SK-N-SH (cell line): ENCODE measurements at regions of chr17 and their contacts with region 1.

Region 1: DNA sequence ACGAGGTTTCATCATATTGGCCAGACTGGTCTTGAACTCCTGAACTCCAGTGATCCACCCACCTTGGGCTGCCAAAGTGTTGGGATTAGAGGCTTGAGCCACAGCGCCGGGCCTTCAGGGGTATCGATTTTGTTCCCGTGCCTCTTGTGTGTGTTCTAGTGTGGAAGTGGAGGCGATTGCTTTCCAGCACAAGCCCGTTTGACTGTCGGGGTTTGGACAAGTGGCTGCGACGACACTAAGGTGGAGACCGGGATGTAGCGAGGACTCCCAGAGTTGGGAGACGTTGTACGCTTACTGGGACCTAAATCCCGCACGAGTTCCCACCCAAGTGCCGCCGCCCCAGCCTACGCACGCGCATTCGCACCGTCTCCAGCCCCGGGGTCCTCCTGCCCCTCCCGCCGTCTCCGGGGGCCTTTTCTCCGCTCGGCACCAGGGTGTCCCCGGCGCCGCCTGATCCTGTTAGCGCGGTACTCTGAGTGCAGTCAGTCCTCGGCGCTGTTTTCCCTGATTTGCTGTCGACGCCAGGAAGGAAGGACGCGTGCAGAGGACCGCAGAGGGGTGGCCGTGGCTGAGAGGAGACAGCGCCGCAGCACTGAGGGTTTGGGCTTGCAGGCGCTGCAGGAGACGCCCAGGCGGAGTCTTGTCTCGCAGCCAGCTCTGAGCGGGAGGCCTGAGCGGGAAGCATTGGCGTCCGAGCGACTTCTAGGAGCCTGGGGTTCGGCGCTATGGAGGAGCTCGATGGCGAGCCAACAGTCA is at the start of gene NUP85:
- DNase-seq: peak; percentile 100
- H3K4me3 ChIP-seq: peak within 1 kb of the TSS; percentile 70 to 87
- H3K27ac ChIP-seq: peak within 1 kb of the TSS; percentile 97 to 98
- H3K4me1 ChIP-seq: peaks cover 4 to 6% of the 10 kb centered on the region in 2 experiments; a peak in 1 of 4 replicates
- H3K27me3 ChIP-seq: no peaks in the 10 kb centered on the region
- CTCF ChIP-seq: no peak
- EP300 ChIP-seq: no peak
- RAD21 ChIP-seq: no peak
- polyA plus RNA-seq, gene NUP85: 80.5 and 99.8 TPM in 2 replicates

Region 2: DNA sequence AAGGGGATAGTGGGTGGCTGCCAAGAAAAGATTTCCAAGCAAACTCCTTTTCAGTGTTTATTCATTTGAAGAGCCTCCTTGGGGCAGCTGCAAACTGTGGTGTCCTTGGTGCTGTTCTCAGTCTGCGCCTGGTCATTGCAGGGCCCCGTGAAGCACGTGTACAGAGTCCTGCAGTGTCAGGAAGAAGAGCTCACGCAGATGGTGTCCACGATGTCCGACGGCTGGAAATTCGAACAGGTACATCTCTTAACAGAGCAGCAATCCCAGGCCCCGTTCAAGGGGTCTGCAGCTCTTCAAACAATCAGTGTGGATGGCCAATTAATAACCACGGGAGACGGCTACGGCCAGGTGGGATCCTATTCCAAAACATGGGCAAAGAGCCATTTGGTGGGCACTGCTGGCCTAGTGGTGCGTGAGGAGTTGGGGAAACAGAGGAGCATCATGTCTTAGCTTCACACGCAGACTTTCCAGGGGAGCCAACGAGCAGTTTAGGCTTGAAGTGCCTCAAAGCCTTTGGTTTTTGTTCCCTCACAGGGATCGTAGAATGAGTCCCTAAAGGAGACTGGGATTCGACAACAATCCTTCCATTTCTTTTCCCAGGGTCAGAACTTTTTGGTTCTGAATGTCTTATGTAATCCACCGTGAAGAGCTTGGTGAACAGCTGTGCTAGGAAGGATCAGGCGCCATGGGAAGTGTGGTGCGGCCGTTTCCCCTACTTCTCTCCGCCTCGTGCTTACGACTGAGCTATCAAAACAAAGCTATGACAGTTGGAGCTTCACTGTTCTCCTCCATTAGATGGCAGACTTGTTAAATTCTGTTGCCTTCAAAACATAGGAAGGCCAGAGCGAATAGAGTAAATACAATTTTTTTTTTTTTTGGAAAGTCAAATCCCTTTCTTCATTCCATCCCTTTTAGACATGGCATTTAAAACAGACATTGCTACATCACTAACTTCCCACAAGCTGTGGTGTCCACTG is 145.6 kb before region 1 on chr17:
- CTCF ChIA-PET with region 1: interaction called, 10 read pairs
- POLR2A ChIA-PET with region 1: no interaction called
- DNase-seq: peak; percentile 47
- H3K4me3 ChIP-seq: no peak overlapping the region
- H3K27ac ChIP-seq: no peak overlapping the region
- H3K4me1 ChIP-seq: no peaks in the 10 kb centered on the region
- H3K27me3 ChIP-seq: no peaks in the 10 kb centered on the region
- CTCF ChIP-seq: peak; percentile 57
- EP300 ChIP-seq: no peak
- RAD21 ChIP-seq: peak; percentile 55

Region 3: DNA sequence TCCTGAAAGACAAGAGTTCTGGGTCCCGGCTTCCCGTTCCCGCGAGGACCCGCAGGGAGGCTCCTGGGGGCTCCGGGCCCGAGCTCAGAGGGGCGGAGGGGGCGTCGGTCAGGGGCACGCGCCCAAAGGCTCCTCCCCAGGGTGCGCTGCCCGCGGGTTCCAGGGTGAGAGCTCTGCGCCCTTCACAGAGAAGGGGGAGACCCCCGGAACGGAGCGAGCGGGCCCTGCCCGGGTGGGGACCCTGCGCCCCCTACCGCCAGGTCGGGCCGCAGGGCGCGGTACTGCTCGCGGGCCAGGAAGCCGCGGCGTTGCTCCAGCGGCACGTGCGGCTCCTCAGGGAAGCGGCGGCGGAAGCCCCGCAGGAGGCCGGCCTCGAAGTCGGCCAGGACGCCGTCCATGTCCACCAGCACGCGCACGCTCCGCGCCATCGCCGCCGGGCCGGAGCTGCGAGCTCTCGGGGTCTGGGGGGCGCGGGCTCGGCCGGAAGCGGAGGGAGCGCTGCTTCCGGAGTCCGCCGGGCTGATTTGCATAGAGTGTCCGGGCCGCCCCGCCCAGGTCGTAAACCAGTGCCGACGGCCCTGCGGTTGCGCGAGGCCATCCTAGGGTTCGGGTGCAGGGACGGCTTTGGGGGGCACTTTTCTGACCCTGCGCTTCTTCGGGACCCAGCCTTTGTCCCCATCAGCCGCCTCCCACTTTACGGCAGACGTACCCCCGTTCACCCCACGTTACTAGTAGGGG is 73.8 kb before region 1 on chr17 and contains the start of gene NT5C:
- CTCF ChIA-PET with region 1: interaction called, 60 read pairs
- POLR2A ChIA-PET with region 1: interaction called, 10 read pairs
- DNase-seq: peak; percentile 97
- H3K4me3 ChIP-seq: peak within 1 kb of the TSS; percentile 64 to 88
- H3K27ac ChIP-seq: peak within 1 kb of the TSS; percentile 78 to 90
- H3K4me1 ChIP-seq: peaks cover 5 to 16% of the 10 kb centered on the region in 2 experiments; a peak in 2 of 4 replicates
- H3K27me3 ChIP-seq: no peaks in the 10 kb centered on the region
- CTCF ChIP-seq: peak; percentile 74
- EP300 ChIP-seq: no peak
- RAD21 ChIP-seq: 0 out of 2 replicates have a peak, but pooled peaks have one; percentile 16
- polyA plus RNA-seq, gene NT5C: 111 and 114 TPM in 2 replicates

Region 4: DNA sequence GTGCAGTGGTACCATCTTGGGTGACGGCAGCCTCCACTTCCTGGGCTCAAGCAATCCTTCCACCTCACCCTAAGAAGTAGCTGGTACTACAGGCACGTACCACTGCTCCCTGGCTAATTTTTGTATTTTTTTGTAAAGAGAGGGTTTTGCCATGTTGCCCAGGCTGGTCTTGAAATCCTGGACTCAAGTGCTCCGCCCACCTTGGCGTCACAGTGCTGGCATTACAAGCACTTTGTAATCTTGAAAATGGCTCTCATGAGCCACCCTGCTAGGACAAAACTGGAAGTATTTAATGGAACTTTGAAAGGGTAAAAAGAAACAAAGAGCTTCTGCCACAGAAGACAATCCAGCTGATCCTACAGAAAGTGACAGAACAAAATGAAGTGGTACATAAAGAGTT is 31.7 kb before region 1 on chr17:
- CTCF ChIA-PET with region 1: interaction called, 61 read pairs
- POLR2A ChIA-PET with region 1: no interaction called
- DNase-seq: no peak
- H3K4me3 ChIP-seq: no peak overlapping the region
- H3K27ac ChIP-seq: no peak overlapping the region
- H3K4me1 ChIP-seq: no peaks in the 10 kb centered on the region
- H3K27me3 ChIP-seq: no peaks in the 10 kb centered on the region
- CTCF ChIP-seq: no peak
- EP300 ChIP-seq: no peak
- RAD21 ChIP-seq: no peak

Region 5: DNA sequence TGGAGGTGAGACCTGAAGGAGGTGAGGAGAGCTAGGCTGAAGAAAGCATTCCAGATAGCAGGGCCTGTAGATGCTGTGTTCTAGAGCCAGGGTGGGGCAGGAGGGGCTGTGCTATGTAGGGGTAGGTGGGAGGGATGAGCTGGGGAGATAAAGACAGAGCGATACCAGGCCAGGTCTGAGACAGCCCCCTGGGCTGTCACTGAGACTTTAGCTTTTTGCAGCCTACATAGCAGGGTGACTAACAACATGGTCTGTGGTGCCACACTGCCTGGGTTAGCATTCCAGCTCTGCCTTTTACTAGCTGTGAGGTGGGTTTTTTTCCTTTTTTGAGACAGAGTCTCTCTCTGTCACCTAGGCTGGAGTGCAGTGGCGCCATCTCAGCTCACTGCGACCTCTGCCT is 14.6 kb after region 1 on chr17:
- CTCF ChIA-PET with region 1: interaction called, 36 read pairs
- POLR2A ChIA-PET with region 1: interaction called, 4 read pairs
- DNase-seq: no peak
- H3K4me3 ChIP-seq: no peak overlapping the region
- H3K27ac ChIP-seq: no peak overlapping the region
- H3K4me1 ChIP-seq: no peaks in the 10 kb centered on the region
- H3K27me3 ChIP-seq: no peaks in the 10 kb centered on the region
- CTCF ChIP-seq: no peak
- EP300 ChIP-seq: no peak
- RAD21 ChIP-seq: no peak

Region 6: DNA sequence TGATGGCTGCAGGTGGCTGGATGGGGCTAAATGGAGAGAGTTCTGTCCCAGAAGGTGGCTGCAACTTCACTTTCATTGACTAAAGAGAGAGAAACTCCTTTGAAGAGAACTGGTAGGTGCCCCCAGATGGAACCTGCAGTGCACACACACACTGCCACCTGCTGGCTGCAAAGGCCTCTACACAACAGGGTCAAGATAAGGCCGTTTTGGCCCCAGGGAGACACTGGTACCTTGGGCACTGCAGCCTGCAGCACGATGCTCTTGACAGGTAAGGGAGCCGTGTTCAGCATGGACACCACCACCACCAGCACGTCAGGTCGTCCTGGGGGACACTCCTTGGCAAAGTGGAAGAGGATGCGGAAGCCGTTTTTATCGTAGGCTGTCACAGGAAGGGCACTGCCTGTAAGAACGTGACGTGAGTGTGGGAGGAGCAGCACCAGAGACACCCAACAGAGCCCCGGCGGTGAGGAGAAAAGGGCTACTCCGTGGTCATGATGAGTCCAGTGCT is 33.5 kb after region 1 on chr17:
- CTCF ChIA-PET with region 1: interaction called, 18 read pairs
- POLR2A ChIA-PET with region 1: no interaction called
- DNase-seq: peak; percentile 90
- H3K4me3 ChIP-seq: no peak overlapping the region
- H3K27ac ChIP-seq: no peak overlapping the region
- H3K4me1 ChIP-seq: no peaks in the 10 kb centered on the region; a peak in 1 of 4 replicates
- H3K27me3 ChIP-seq: no peaks in the 10 kb centered on the region
- CTCF ChIP-seq: peak; percentile 98
- EP300 ChIP-seq: no peak
- RAD21 ChIP-seq: peak; percentile 54

Region 7: GRCh38 chr17:75632863-75633485 is 427.8 kb after region 1 on chr17 and contains the start of gene SMIM5:
- CTCF ChIA-PET with region 1: no interaction called
- POLR2A ChIA-PET with region 1: no interaction called
- DNase-seq: peak; percentile 98
- H3K4me3 ChIP-seq: no peak within 1 kb of the TSS; a peak in 1 of 4 replicates
- H3K27ac ChIP-seq: peak within 1 kb of the TSS in 1 of 2 experiments; percentile 59; a peak in 3 of 4 replicates
- H3K4me1 ChIP-seq: peaks cover 12 to 15% of the 10 kb centered on the region in 2 experiments; a peak in 3 of 4 replicates
- H3K27me3 ChIP-seq: no peaks in the 10 kb centered on the region
- CTCF ChIP-seq: peak; percentile 99
- EP300 ChIP-seq: no peak
- RAD21 ChIP-seq: peak; percentile 72
- polyA plus RNA-seq, gene SMIM5: 0.02 TPM in 1 of 2 replicates, not detected in the other